A549 (cell line): ENCODE measurements at regions of chr1 and their contacts with region 1.

Region 1: GRCh38 chr1:204751894-204752687 is 66.6 kb upstream of the LRRN2 start:
- DNase-seq: peak; percentile 46 to 85
- ATAC-seq: peak; percentile 94 to 100
- H3K4me3 ChIP-seq: peak overlapping the region; percentile 37
- H3K27ac ChIP-seq: peak overlapping the region; percentile 59 to 83
- H3K4me1 ChIP-seq: peaks cover 14% of the 10 kb centered on the region
- CTCF ChIP-seq: peak; percentile 46
- EP300 ChIP-seq: no peak
- POLR2A ChIP-seq: peak; percentile 23; the same call in 1 of the 2 replicates
- RAD21 ChIP-seq: peak; percentile 34 to 57; a peak in 4 of 5 replicates

Region 2: DNA sequence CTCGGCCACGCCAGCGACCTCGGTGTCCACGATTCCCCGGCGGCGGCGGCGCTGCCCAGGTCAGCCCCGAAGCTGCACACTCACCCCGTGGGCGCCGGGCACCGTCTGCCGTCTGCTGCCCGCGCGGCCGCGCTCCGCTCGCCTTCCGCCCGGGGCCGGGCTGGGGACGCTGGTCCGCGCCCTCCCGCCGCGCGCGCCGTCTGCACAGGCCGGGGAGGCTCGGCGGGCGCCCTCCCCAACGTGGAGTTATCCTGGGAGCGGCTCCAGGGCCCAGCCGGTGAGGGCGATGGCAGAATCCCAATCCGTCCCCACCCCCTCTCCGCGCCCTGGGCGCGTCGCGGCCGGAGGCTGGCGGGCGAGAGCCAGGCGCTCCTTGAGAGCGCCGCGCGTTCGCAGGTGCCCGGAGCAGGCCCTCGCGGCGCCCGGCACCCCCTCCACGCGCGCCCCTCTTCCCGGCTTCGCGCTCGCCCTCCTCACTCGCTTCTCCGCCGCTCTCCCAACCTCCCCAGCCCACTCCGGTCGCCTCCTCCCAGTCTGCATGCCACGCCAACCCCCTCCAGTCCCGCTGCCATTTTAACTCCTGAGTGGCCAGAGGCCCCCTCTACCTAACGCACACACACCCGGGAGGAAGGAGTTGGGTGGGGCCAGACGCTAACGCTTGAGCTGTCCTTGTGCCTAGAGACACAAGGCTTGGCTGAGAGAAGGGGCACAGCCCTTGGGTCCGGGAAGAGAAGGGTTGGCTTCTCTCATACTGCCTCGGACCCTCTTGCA is 66.7 kb before region 1 on chr1 and contains the start of gene LRRN2:
- CTCF ChIA-PET with region 1: interaction called, 15 read pairs
- POLR2A ChIA-PET with region 1: no interaction called
- DNase-seq: peak; percentile 28 to 60
- ATAC-seq: peak; percentile 69
- H3K4me3 ChIP-seq: peak within 1 kb of the TSS; percentile 65
- H3K27ac ChIP-seq: peak within 1 kb of the TSS; percentile 82 to 98
- H3K4me1 ChIP-seq: peaks cover 14% of the 10 kb centered on the region
- CTCF ChIP-seq: no peak
- EP300 ChIP-seq: no peak
- POLR2A ChIP-seq: no peak; the same call in none of the 2 replicates
- RAD21 ChIP-seq: no peak
- polyA plus RNA-seq, gene LRRN2: 3.6 and 4.3 TPM in 2 replicates

Region 3: GRCh38 chr1:204726478-204726877 is 25.6 kb before region 1 on chr1:
- CTCF ChIA-PET with region 1: interaction called, 25 read pairs
- POLR2A ChIA-PET with region 1: no interaction called
- DNase-seq: peak; percentile 90 to 96
- ATAC-seq: peak; percentile 87 to 90
- H3K4me3 ChIP-seq: 0 out of 3 replicates have a peak overlapping the region, but pooled peaks have one; percentile 6
- H3K27ac ChIP-seq: peak overlapping the region; percentile 45 to 82; a peak in 5 of 6 replicates
- H3K4me1 ChIP-seq: peaks cover 48% of the 10 kb centered on the region
- CTCF ChIP-seq: no peak
- EP300 ChIP-seq: no peak
- POLR2A ChIP-seq: no peak
- RAD21 ChIP-seq: no peak

Region 4: GRCh38 chr1:204872262-204872881 is 120.3 kb after region 1 on chr1:
- CTCF ChIA-PET with region 1: no interaction called
- POLR2A ChIA-PET with region 1: no interaction called
- DNase-seq: no peak
- ATAC-seq: no peak
- H3K4me3 ChIP-seq: no peak overlapping the region
- H3K27ac ChIP-seq: no peak overlapping the region
- H3K4me1 ChIP-seq: no peaks in the 10 kb centered on the region
- CTCF ChIP-seq: no peak
- EP300 ChIP-seq: no peak
- POLR2A ChIP-seq: no peak
- RAD21 ChIP-seq: no peak